ENCODE measurements at regions of chr7 and their contacts with region 1.

Region 1: DNA sequence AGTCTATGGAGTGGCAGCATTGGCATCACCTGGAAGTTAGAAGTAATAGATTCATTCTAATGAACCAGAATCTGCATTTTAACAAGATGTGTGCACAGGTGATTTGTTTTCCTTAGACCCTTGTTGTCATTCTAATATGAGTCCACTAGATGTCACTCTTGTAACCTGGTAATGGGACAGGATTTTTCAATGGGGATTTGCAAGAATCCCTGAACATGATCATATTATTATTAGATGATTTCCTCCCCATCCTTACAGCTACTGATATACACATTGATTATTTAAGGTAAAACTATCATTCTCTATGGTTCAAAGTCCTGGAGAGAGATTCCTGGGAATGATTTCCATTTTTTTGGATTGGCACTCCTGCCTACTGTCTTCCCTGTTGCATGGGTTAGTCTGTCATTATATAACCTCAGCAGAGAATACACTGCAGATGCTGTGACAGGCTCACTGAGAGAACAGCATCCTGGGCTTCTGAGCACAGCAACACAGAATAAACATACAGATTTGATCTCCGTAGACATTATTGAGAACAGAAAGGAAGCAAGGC is 194.9 kb downstream of the SUGCT start:
- DNase-seq: no peak
- H3K4me3 ChIP-seq: no peak overlapping the region
- H3K27ac ChIP-seq: no peak overlapping the region
- H3K4me1 ChIP-seq: no peaks in the 10 kb centered on the region
- H3K27me3 ChIP-seq: no peaks in the 10 kb centered on the region
- CTCF ChIP-seq: peak; percentile 42 to 67 (median 59)
- POLR2A ChIP-seq: no peak

Region 2: GRCh38 chr7:39184380-39184779 is 1145.3 kb before region 1 on chr7:
- intact Hi-C with region 1: loop called (anchors 10 kb)
- DNase-seq: no peak
- H3K4me3 ChIP-seq: no peak overlapping the region
- H3K27ac ChIP-seq: no peak overlapping the region
- H3K4me1 ChIP-seq: no peaks in the 10 kb centered on the region
- H3K27me3 ChIP-seq: no peaks in the 10 kb centered on the region
- CTCF ChIP-seq: no peak
- POLR2A ChIP-seq: no peak

Measured in vagina (tissue), 2 donors.